Activated naive CD8-positive, alpha-beta T cell treated with anti-CD3 and anti-CD28 coated beads, Interleukin-2, amount 10 ng/mL, durations not matched to agents 7 days and 5 days (primary cell): ENCODE measurements at regions of chr6 and their contacts with region 1.

Region 1: GRCh38 chr6:31795616-31796298 is at the start of gene VARS1:
- DNase-seq: peak; percentile 92
- ATAC-seq: peak; percentile 82
- H3K4me3 Mint-ChIP-seq: peak within 1 kb of the TSS; percentile 98
- H3K27ac Mint-ChIP-seq: peak within 1 kb of the TSS; percentile 97
- H3K4me1 Mint-ChIP-seq: peaks cover 35% of the 10 kb centered on the region
- H3K27me3 Mint-ChIP-seq: no peaks in the 10 kb centered on the region
- total RNA-seq, gene VARS1: 68.2 to 75.3 TPM

Region 2: DNA sequence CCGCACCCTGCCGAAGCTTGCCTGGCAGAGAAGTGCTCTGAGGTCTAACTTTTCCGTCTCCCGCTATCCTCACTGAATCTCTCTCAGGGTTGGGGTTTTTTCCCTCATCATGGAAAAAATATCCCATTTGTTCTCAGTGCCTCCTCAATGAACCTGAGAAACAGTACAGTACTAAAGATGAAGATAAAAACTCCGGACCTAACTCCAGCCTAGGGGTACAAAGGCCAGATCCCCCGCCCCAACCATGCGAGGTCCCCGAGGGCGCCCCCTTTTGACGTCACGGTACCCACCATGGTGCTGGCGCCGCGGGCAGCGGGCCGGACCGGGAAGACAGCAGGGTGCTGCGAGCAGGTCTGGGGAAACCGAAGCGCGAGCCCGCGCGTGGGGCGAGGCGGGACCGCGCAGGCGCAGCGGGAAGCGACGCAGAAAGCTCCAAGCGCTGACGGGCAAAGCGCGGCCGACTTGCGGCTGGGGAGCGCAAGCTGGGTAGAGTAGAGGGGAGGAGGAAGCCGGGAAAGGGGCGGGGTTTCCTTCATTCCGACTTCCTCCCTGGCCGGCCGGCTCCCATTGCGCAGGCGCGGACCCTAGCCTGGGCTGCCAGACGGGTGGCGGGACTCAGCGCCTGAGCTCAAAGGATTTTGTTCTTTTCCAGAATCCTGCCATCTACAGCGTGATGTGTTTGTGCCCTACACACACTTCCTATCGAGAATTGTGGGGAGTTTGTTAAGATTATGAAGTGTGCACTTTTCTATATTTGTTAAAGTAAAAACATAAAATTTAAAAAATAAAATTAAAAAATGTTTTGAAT is 10.9 kb after region 1 on chr6 and contains the start of gene LSM2:
- POLR2A ChIA-PET with region 1: interaction called, 66 read pairs
- DNase-seq: peak; percentile 98
- ATAC-seq: peak; percentile 96
- H3K4me3 Mint-ChIP-seq: peak within 1 kb of the TSS; percentile 99
- H3K27ac Mint-ChIP-seq: peak within 1 kb of the TSS; percentile 94
- H3K4me1 Mint-ChIP-seq: peaks cover 20% of the 10 kb centered on the region
- H3K27me3 Mint-ChIP-seq: no peaks in the 10 kb centered on the region
- total RNA-seq, gene LSM2: 89.9 to 97.9 TPM